HepG2 (cell line): ENCODE measurements at regions of chr16 and their contacts with region 1.

Region 1: GRCh38 chr16:68022704-68023522 is at the starts of genes DDX28 and DUS2:
- DNase-seq: peak; percentile 88
- ATAC-seq: peak; percentile 88
- H3K4me3 ChIP-seq: peak within 1 kb of the TSS; percentile 92 to 99 (median 92)
- H3K27ac ChIP-seq: peak within 1 kb of the TSS; percentile 83
- H3K4me1 ChIP-seq: peaks cover 24% of the 10 kb centered on the region
- H3K27me3 ChIP-seq: no peaks in the 10 kb centered on the region; a peak in 1 of 5 replicates
- CTCF ChIP-seq: peak; percentile 34; the same call in 1 of the 2 replicates
- EP300 ChIP-seq: peak; percentile 37 to 77; a peak in 2 of 4 replicates
- POLR2A ChIP-seq: peak; percentile 88 to 92
- RAD21 ChIP-seq: peak; percentile 38; the same call in 1 of the 2 replicates
- total RNA-seq, gene DDX28: 16.4 and 18.4 TPM in 2 replicates
- total RNA-seq, gene DUS2: 25.1 and 25.9 TPM in 2 replicates

Region 2: GRCh38 chr16:67987460-67988160 is 35.3 kb before region 1 on chr16:
- CTCF ChIA-PET with region 1: interaction called, 3 read pairs
- POLR2A ChIA-PET with region 1: interaction called, 13 read pairs
- in situ Hi-C with region 1: no loop called
- intact Hi-C with region 1: no loop called
- DNase-seq: peak; percentile 57
- ATAC-seq: peak; percentile 66
- H3K4me3 ChIP-seq: peak overlapping the region; percentile 24 to 61 (median 30)
- H3K27ac ChIP-seq: no peak overlapping the region
- H3K4me1 ChIP-seq: peaks cover 60% of the 10 kb centered on the region
- H3K27me3 ChIP-seq: peaks cover 2 to 18% of the 10 kb centered on the region in 2 experiments
- CTCF ChIP-seq: peak; percentile 41
- EP300 ChIP-seq: no peak
- POLR2A ChIP-seq: peak; percentile 40 to 48; a peak in 2 of 4 replicates
- RAD21 ChIP-seq: no peak

Region 3: DNA sequence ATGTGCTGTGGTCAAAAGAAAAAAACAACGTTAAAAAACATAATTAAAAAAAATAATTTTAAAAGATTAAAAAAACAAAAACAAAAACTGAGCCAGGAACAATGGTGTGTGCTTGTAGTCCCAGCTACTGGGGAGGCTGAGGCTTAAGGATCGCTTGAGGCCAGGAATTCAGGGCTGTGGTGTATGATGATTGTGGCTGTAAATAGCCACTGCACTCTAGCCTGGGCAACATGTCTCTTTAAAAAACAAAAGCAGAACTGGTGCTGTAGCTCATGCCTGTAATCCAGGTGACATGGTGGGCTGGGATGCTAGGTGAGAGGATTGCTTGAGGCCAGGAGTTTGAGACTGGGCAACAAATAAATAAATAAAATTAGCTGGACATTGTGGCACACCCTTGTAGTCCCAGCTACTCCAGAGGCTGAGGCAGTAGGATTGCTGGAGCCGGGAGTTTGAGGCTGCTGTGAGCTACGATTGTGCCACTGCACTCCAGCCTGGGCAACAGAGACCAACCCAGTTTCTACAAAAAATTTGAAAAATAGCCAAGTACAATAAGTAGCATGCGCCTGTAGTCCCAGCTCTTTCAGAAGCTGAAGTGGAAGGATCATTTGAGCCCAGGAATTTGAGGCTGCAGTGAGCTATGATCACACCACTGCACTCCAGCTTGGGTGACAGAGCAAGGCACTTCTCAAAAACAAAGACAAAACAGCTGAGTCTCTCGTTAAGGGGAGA is 105.8 kb after region 1 on chr16:
- CTCF ChIA-PET with region 1: no interaction called
- POLR2A ChIA-PET with region 1: no interaction called
- in situ Hi-C with region 1: no loop called
- intact Hi-C with region 1: no loop called
- DNase-seq: peak; percentile 35
- ATAC-seq: peak; percentile 71
- H3K4me3 ChIP-seq: no peak overlapping the region
- H3K27ac ChIP-seq: peak overlapping the region; percentile 53
- H3K4me1 ChIP-seq: peaks cover 55% of the 10 kb centered on the region
- H3K27me3 ChIP-seq: no peaks in the 10 kb centered on the region
- CTCF ChIP-seq: no peak
- EP300 ChIP-seq: no peak
- POLR2A ChIP-seq: no peak
- RAD21 ChIP-seq: no peak

Region 4: DNA sequence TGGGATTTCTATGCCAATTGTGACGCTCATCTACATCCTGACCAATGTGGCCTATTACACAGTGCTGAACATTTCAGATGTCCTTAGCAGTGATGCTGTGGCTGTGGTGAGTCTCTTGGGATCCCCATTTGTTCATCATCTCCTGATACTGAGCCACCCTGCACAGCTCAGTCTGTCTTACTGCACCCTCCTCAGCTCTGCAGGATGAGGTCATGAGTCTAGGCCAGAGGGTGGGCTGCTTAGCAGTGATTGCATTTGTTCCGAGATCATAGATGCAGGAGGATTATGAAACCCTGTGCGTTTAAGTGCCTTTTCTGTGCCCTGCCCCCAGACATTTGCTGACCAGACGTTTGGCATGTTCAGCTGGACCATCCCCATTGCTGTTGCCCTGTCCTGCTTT is 268.3 kb after region 1 on chr16:
- CTCF ChIA-PET with region 1: no interaction called
- POLR2A ChIA-PET with region 1: no interaction called
- in situ Hi-C with region 1: no loop called
- intact Hi-C with region 1: no loop called
- DNase-seq: no peak
- ATAC-seq: no peak
- H3K4me3 ChIP-seq: no peak overlapping the region
- H3K27ac ChIP-seq: no peak overlapping the region
- H3K4me1 ChIP-seq: peaks cover 4% of the 10 kb centered on the region
- H3K27me3 ChIP-seq: no peaks in the 10 kb centered on the region
- CTCF ChIP-seq: no peak
- EP300 ChIP-seq: no peak
- POLR2A ChIP-seq: no peak
- RAD21 ChIP-seq: no peak